ENCODE measurements at regions of chr17 and their contacts with region 1.

Region 1: GRCh38 chr17:57370037-57370581 is 113.8 kb downstream of the MSI2 start:
- DNase-seq: no peak
- ATAC-seq: peak; percentile 84
- H3K4me3 ChIP-seq: no peak overlapping the region
- H3K27ac ChIP-seq: peak overlapping the region; percentile 75
- H3K4me1 ChIP-seq: peaks cover 51% of the 10 kb centered on the region
- H3K27me3 ChIP-seq: no peaks in the 10 kb centered on the region
- CTCF ChIP-seq: no peak
- EP300 ChIP-seq: peak; percentile 47 to 88; a peak in 3 of 4 replicates
- POLR2A ChIP-seq: no peak
- RAD21 ChIP-seq: no peak

Region 2: GRCh38 chr17:57255776-57256681 is 114.1 kb before region 1 on chr17 and contains the start of gene MSI2:
- CTCF ChIA-PET with region 1: interaction called, 3 read pairs
- POLR2A ChIA-PET with region 1: interaction called, 11 read pairs
- RAD21 ChIA-PET with region 1: interaction called, 9 read pairs
- SMC1A ChIA-PET with region 1: interaction called, 19 read pairs
- in situ Hi-C with region 1: no loop called
- intact Hi-C with region 1: no loop called
- DNase-seq: peak; percentile 51
- ATAC-seq: peak; percentile 82
- H3K4me3 ChIP-seq: peak within 1 kb of the TSS; percentile 95
- H3K27ac ChIP-seq: peak within 1 kb of the TSS; percentile 34
- H3K4me1 ChIP-seq: peaks cover 6% of the 10 kb centered on the region
- H3K27me3 ChIP-seq: no peaks in the 10 kb centered on the region
- CTCF ChIP-seq: no peak
- EP300 ChIP-seq: no peak
- POLR2A ChIP-seq: no peak
- RAD21 ChIP-seq: no peak
- polyA plus RNA-seq, gene MSI2: 6.1 to 9.5 TPM

Region 3: DNA sequence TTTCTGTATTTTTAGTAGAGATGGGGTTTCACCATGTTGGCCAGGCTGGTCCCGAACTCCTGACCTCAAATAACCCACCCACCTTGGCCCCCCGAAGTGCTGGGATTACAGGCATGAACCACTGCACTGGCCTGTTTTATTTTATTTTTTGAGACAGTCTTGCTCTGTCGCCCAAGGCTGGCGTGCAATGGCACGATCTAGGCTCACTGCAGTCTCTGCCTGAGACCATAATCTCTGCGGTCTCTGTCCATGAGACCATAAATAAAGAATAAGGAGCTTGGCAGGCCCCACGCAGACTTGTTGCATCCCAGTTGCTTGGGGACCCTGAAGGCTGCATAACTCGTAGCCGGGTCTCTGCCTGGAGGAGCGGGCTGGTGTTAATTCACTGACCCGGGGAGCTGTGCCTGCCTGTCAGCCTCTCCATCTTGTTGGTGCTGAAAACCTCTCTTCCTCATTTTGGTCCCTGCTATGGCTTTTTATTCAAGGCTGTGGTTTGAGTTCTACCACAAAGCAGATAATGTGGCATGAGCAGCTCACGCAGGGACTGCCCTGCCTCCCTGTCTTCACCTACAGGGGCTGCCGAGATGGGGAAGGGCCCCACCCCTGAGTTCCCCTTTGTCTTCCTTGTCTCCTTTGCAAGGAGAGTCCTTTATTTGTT is 31.7 kb before region 1 on chr17:
- CTCF ChIA-PET with region 1: no interaction called
- POLR2A ChIA-PET with region 1: interaction called, 3 read pairs
- RAD21 ChIA-PET with region 1: interaction called, 7 read pairs
- SMC1A ChIA-PET with region 1: interaction called, 15 read pairs
- in situ Hi-C with region 1: no loop called
- intact Hi-C with region 1: no loop called
- DNase-seq: peak; percentile 64
- ATAC-seq: peak; percentile 92
- H3K4me3 ChIP-seq: peak overlapping the region; percentile 20; the same call in 1 of the 2 replicates
- H3K27ac ChIP-seq: peak overlapping the region; percentile 64
- H3K4me1 ChIP-seq: peaks cover 29% of the 10 kb centered on the region
- H3K27me3 ChIP-seq: no peaks in the 10 kb centered on the region
- CTCF ChIP-seq: no peak
- EP300 ChIP-seq: peak; percentile 61 to 73; a peak in 3 of 4 replicates
- POLR2A ChIP-seq: no peak
- RAD21 ChIP-seq: 0 out of 2 replicates have a peak, but pooled peaks have one; percentile 5

Region 4: GRCh38 chr17:57385975-57386374 is 15.9 kb after region 1 on chr17:
- CTCF ChIA-PET with region 1: no interaction called
- POLR2A ChIA-PET with region 1: no interaction called
- RAD21 ChIA-PET with region 1: no interaction called
- SMC1A ChIA-PET with region 1: interaction called, 16 read pairs
- in situ Hi-C with region 1: no loop called
- intact Hi-C with region 1: no loop called
- DNase-seq: no peak
- ATAC-seq: no peak
- H3K4me3 ChIP-seq: no peak overlapping the region
- H3K27ac ChIP-seq: no peak overlapping the region
- H3K4me1 ChIP-seq: no peaks in the 10 kb centered on the region
- H3K27me3 ChIP-seq: no peaks in the 10 kb centered on the region
- CTCF ChIP-seq: no peak
- EP300 ChIP-seq: no peak
- POLR2A ChIP-seq: no peak
- RAD21 ChIP-seq: no peak

Region 5: DNA sequence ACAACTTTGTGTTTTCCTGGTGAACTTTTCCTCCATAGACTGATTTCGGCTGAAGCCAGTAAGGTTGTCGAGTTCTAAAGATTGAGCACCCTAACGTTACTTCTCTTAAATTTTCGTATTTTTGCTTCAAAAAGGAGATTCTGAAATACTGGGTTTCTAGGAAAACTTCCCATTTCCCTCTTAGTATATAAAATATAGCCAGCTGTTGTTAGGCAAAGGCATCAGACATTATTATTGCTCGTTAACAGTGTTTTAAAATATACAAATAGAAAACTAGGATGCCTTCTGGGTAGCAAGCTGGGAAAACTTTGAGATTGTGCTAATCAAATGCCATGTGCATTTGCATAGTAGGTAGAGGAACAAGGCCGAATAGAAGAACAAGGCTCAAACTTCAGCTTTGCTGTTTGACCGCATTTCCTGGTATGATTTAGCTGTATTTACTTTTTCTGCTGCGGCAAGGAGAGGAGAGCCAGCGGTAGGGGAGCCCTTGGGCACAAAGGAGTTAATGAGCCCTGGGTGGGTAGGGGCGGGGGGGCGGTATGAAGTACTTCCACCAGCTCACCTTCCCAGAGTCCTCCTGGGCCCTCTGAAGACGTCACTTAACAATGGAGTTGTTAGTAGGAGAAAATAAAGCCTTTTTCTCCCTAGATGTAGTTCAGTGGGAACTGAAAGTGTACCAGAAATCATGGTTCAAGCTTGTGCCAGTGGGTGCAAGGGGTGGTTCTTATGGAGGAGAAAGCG is 38.1 kb after region 1 on chr17:
- CTCF ChIA-PET with region 1: interaction called, 3 read pairs
- POLR2A ChIA-PET with region 1: interaction called, 3 read pairs
- RAD21 ChIA-PET with region 1: interaction called, 3 read pairs
- SMC1A ChIA-PET with region 1: interaction called, 22 read pairs
- in situ Hi-C with region 1: no loop called
- intact Hi-C with region 1: no loop called
- DNase-seq: peak; percentile 46
- ATAC-seq: peak; percentile 92
- H3K4me3 ChIP-seq: no peak overlapping the region
- H3K27ac ChIP-seq: peak overlapping the region; percentile 54
- H3K4me1 ChIP-seq: peaks cover 9% of the 10 kb centered on the region
- H3K27me3 ChIP-seq: no peaks in the 10 kb centered on the region
- CTCF ChIP-seq: peak in 1 of 3 experiments; percentile 10; a peak in 1 of 6 replicates
- EP300 ChIP-seq: no peak
- POLR2A ChIP-seq: no peak
- RAD21 ChIP-seq: no peak

Region 6: GRCh38 chr17:57544834-57545463 is 174.8 kb after region 1 on chr17:
- CTCF ChIA-PET with region 1: no interaction called
- POLR2A ChIA-PET with region 1: no interaction called
- RAD21 ChIA-PET with region 1: no interaction called
- SMC1A ChIA-PET with region 1: no interaction called
- in situ Hi-C with region 1: no loop called
- intact Hi-C with region 1: no loop called
- DNase-seq: no peak
- ATAC-seq: no peak
- H3K4me3 ChIP-seq: no peak overlapping the region
- H3K27ac ChIP-seq: no peak overlapping the region
- H3K4me1 ChIP-seq: peaks cover 21% of the 10 kb centered on the region
- H3K27me3 ChIP-seq: no peaks in the 10 kb centered on the region
- CTCF ChIP-seq: no peak
- EP300 ChIP-seq: no peak
- POLR2A ChIP-seq: no peak
- RAD21 ChIP-seq: no peak

Measured in GM12878 (cell line).